Activated T-helper 2 cell treated with anti-CD3 and anti-CD28 coated beads, Interferon-gamma antibody, Interleukin-2, Interleukin-4, amounts not matched to agents 10 μg/mL and 5 μg/mL and 100 μg/mL, durations not matched to agents 14 hours and 24 hours and 36 hours (primary cell): ENCODE measurements at regions of chr20 and their contacts with region 1.

Region 1: GRCh38 chr20:6959900-6960312 is 192.4 kb downstream of the BMP2 start:
- DNase-seq: no peak
- H3K4me3 Mint-ChIP-seq: no peak overlapping the region
- H3K27ac Mint-ChIP-seq: no peak overlapping the region
- H3K4me1 Mint-ChIP-seq: no peaks in the 10 kb centered on the region
- H3K27me3 Mint-ChIP-seq: no peaks in the 10 kb centered on the region

Region 2: DNA sequence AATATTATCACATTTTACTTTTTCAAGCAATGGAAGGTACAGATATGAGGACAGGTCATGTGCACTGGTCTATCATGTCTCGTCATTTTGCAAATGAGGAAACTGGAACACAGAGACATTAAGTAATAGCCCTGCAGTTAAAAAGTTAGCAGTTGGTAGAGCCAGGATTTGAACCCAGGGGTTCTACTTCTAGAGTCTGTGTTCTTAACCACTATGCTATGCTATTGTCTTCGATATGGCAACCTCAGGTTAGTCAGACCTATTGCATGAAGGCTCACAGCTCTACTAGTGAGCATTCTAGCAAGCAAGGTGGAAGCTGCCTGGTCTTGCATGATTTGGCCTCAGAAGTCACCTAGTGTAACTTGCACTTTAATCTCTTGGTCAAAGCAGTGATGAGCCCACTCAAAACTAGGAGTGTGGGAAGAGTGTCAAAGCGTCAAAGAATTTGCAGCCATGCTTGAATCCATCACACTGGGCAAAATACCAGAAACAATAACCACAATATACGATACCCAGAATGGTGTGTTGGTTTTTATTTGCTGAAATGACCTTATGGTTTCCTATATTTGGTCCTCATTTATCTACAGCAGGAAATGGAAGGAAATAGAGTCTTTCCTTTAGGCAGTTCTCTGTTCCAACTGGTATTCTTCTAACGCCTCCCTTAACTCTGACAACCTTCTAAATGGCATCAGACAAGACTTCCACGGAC is 212.9 kb before region 1 on chr20:
- intact Hi-C with region 1: no loop called
- DNase-seq: no peak
- H3K4me3 Mint-ChIP-seq: no peak overlapping the region
- H3K27ac Mint-ChIP-seq: no peak overlapping the region
- H3K4me1 Mint-ChIP-seq: no peaks in the 10 kb centered on the region
- H3K27me3 Mint-ChIP-seq: no peaks in the 10 kb centered on the region

Region 3: GRCh38 chr20:8646033-8646441 is 1686.1 kb after region 1 on chr20:
- intact Hi-C with region 1: loop called (anchors 5 kb)
- DNase-seq: no peak
- H3K4me3 Mint-ChIP-seq: no peak overlapping the region
- H3K27ac Mint-ChIP-seq: no peak overlapping the region
- H3K4me1 Mint-ChIP-seq: no peaks in the 10 kb centered on the region
- H3K27me3 Mint-ChIP-seq: no peaks in the 10 kb centered on the region